SK-N-SH (cell line): ENCODE measurements at regions of chr7 and their contacts with region 1.

Region 1: GRCh38 chr7:76020031-76020714 is 25.8 kb upstream of the TMEM120A start:
- DNase-seq: peak; percentile 85
- H3K4me3 ChIP-seq: no peak overlapping the region
- H3K27ac ChIP-seq: no peak overlapping the region
- H3K4me1 ChIP-seq: no peaks in the 10 kb centered on the region
- H3K27me3 ChIP-seq: no peaks in the 10 kb centered on the region
- CTCF ChIP-seq: peak; percentile 99
- EP300 ChIP-seq: no peak
- RAD21 ChIP-seq: peak; percentile 99

Region 2: GRCh38 chr7:75842836-75843446 is 177.2 kb before region 1 on chr7:
- CTCF ChIA-PET with region 1: interaction called, 18 read pairs
- POLR2A ChIA-PET with region 1: no interaction called
- DNase-seq: no peak
- H3K4me3 ChIP-seq: no peak overlapping the region
- H3K27ac ChIP-seq: no peak overlapping the region
- H3K4me1 ChIP-seq: peaks cover 2 to 9% of the 10 kb centered on the region in 2 experiments; a peak in 1 of 4 replicates
- H3K27me3 ChIP-seq: peaks cover 12% of the 10 kb centered on the region
- CTCF ChIP-seq: no peak
- EP300 ChIP-seq: no peak
- RAD21 ChIP-seq: no peak

Region 3: DNA sequence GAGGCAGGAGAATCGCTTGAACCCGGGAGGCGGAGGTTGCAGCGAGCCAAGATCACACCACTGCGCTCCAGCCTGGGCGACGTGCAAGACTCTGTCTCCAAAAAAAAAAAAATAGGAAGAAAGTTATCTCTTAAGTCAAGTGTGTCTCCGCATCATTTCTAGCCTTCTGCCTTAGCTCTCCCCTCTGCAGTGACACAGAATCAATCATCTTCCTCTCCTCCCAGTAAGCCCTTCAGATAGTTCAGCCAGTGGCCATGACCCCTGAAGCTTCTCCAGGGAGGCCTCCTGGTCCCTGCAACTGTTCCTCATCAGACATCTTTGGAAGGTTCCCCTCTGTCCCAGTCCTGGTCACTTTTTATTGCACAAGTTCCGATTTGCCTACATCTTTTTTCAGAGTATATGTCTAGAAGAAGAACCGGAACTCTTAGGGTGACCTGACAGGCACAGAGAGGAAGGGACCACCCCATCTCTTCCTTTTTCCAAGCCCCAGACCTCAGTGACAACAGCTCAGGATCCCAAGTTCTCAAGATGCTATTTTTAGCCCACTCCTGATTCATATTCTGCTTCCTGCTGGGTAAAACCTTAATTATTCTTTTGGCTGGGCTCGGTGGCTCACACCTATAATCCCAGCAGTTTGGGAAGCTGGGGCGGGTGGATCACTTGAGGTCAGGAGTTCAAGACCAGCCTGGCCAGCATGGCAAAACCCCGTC is 147.9 kb before region 1 on chr7:
- CTCF ChIA-PET with region 1: interaction called, 305 read pairs
- POLR2A ChIA-PET with region 1: interaction called, 13 read pairs
- DNase-seq: no peak
- H3K4me3 ChIP-seq: no peak overlapping the region
- H3K27ac ChIP-seq: peak overlapping the region in 1 of 2 experiments; percentile 19; a peak in 2 of 4 replicates
- H3K4me1 ChIP-seq: peaks cover 0 to 7% of the 10 kb centered on the region in 2 experiments; a peak in 1 of 4 replicates
- H3K27me3 ChIP-seq: no peaks in the 10 kb centered on the region
- CTCF ChIP-seq: no peak
- EP300 ChIP-seq: no peak
- RAD21 ChIP-seq: no peak

Region 4: GRCh38 chr7:75905785-75906604 is 114.2 kb before region 1 on chr7:
- CTCF ChIA-PET with region 1: interaction called, 15 read pairs
- POLR2A ChIA-PET with region 1: no interaction called
- DNase-seq: no peak
- H3K4me3 ChIP-seq: no peak overlapping the region
- H3K27ac ChIP-seq: no peak overlapping the region
- H3K4me1 ChIP-seq: no peaks in the 10 kb centered on the region
- H3K27me3 ChIP-seq: no peaks in the 10 kb centered on the region
- CTCF ChIP-seq: no peak
- EP300 ChIP-seq: no peak
- RAD21 ChIP-seq: no peak

Region 5: GRCh38 chr7:76000367-76000965 is 19.7 kb before region 1 on chr7:
- CTCF ChIA-PET with region 1: interaction called, 56 read pairs
- POLR2A ChIA-PET with region 1: no interaction called
- DNase-seq: no peak
- H3K4me3 ChIP-seq: no peak overlapping the region
- H3K27ac ChIP-seq: no peak overlapping the region
- H3K4me1 ChIP-seq: no peaks in the 10 kb centered on the region
- H3K27me3 ChIP-seq: no peaks in the 10 kb centered on the region
- CTCF ChIP-seq: no peak
- EP300 ChIP-seq: no peak
- RAD21 ChIP-seq: no peak

Region 6: DNA sequence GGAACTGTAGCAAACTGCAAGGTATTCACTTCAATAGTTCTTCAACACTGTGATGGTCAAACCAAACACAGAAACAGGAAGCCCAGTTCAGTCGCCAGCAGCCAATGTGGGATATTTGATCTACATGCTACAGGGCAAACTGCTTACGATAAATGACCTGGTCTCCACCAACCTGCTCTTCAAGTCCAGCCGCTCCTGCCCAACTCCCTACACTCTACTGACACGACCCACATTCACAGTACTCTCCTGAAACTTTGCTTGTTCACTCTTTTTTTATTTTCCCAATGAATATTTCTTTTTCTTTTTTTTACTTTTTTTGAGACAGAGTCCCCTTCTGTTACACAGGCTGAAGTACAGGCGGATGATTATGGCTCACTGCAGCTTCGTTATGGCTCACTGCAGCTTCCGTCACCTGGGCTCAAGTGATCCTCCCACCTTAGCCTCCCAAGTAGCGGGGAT is 69.8 kb after region 1 on chr7:
- CTCF ChIA-PET with region 1: no interaction called
- POLR2A ChIA-PET with region 1: no interaction called
- DNase-seq: no peak
- H3K4me3 ChIP-seq: no peak overlapping the region
- H3K27ac ChIP-seq: no peak overlapping the region
- H3K4me1 ChIP-seq: peaks cover 0 to 21% of the 10 kb centered on the region in 2 experiments; a peak in 2 of 4 replicates
- H3K27me3 ChIP-seq: no peaks in the 10 kb centered on the region; the same call in 1 of the 2 replicates
- CTCF ChIP-seq: no peak
- EP300 ChIP-seq: no peak
- RAD21 ChIP-seq: no peak

Region 7: DNA sequence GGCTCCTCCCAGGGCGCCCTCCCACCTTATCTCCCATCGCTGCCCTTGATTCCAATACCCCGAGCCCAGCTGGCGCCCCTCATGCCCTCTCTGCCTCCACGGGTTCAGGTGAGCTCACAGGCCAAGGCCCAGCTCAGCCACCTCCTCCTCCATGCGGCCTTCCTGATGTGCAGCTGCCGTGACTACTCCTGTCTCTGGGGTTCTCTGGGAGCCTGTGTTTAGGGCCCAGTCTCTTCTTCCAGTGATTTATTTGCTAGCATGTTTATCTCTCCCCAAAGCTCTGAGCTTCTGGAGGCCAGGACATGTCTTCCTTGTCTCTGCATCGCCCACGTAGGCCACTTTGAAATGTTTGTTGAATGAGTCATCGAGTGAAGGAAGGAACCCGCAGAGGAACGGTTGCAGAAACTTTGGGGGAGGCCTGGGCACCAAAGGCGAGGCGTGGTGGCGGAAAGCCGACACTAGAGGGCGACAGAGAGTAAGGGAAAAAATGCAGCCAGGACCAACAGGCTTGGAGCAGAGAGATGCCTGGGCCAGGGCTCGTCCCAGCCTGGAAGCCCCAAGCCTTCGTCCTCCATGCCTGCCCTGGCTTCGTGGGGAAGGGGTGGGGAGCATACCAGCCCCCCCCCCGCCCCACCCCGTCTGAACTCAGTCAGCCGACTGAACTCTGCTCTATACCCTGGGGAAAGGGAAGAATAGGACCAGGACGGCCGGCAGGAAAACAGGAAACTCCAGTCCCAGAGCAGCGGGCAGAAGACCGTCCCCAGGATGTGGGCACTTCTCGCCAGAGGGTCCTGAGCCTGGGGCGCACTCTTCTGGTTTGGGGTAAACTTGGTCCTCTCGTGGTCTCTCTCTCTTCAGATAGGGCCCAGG is 271.4 kb after region 1 on chr7:
- CTCF ChIA-PET with region 1: no interaction called
- POLR2A ChIA-PET with region 1: no interaction called
- DNase-seq: peak; percentile 92
- H3K4me3 ChIP-seq: peak overlapping the region in 1 of 2 experiments; percentile 0; a peak in 1 of 4 replicates
- H3K27ac ChIP-seq: peak overlapping the region; percentile 67 to 91
- H3K4me1 ChIP-seq: peaks cover 26 to 36% of the 10 kb centered on the region in 2 experiments; a peak in 3 of 4 replicates
- H3K27me3 ChIP-seq: no peaks in the 10 kb centered on the region
- CTCF ChIP-seq: peak; percentile 99
- EP300 ChIP-seq: peak; percentile 18 to 56; a peak in 2 of 4 replicates
- RAD21 ChIP-seq: peak; percentile 98